CD8-positive, alpha-beta T cell (primary cell): ENCODE measurements at regions of chr16 and their contacts with region 1.

Region 1: DNA sequence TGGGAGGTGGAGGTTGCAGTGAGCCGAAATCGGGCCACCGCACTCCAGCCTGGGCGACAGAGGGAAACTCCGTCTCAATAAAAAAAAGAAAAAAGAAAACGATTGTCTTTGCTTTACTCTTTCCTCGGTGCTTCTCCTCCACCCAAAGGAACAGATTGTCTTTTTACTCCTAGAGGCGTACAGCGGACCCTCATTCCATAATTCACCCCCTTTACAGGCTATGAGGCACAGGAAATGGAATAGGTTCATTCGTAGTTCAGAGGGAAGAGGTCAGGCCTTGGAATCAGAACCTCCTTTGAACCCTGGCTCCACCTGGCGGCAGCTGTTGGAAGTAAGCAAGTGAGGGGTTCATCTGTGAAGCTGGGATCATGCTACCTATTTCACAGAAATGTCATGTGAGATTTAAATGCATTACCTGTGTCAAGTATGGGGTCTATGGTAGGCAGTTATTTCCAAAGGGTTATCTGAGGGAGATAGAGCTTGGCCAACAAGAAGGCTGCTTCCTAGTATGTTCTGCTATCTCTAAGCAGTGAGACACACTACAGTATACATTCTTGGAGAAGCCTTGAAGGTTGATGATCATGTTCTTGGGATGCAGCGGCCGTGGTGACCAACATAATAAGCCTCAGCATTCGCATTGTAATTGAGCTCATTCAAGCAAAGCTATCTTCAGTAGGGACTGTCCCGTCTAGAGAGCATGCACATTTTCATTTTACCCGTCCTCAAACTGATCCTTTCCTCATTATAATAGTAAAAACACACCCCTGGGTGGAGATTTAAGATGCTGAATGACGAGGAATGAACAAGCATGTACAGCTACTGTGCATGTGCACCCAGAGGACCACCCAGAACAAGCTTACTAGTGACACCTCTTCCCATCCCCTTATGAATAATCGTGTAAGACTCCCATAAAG is 18.7 kb upstream of the ZNF689 start:
- DNase-seq: peak; percentile 77 to 92 (median 84)
- ATAC-seq: peak; percentile 96
- H3K4me3 ChIP-seq: peak overlapping the region in 1 of 2 experiments; percentile 10
- H3K4me3 Mint-ChIP-seq: peak overlapping the region; percentile 79
- H3K27ac ChIP-seq: peak overlapping the region in 1 of 2 experiments; percentile 19
- H3K27ac Mint-ChIP-seq: no peak overlapping the region
- H3K4me1 ChIP-seq: peaks cover 9% of the 10 kb centered on the region
- H3K4me1 Mint-ChIP-seq: peaks cover 5% of the 10 kb centered on the region
- H3K27me3 ChIP-seq: no peaks in the 10 kb centered on the region
- H3K27me3 Mint-ChIP-seq: no peaks in the 10 kb centered on the region
- CTCF ChIP-seq: peak; percentile 85

Region 2: GRCh38 chr16:30557957-30558788 is 70.7 kb before region 1 on chr16 and contains the start of gene ZNF764:
- CTCF ChIA-PET with region 1: interaction called, 3 read pairs
- POLR2A ChIA-PET with region 1: interaction called, 5 read pairs
- intact Hi-C with region 1: loop called in 1 of 2 experiments (anchors 1 kb)
- DNase-seq: peak; percentile 88 to 98 (median 96)
- ATAC-seq: peak; percentile 90
- H3K4me3 ChIP-seq: peak within 1 kb of the TSS; percentile 68 to 84
- H3K4me3 Mint-ChIP-seq: peak within 1 kb of the TSS; percentile 84
- H3K27ac ChIP-seq: peak within 1 kb of the TSS; percentile 80 to 88
- H3K27ac Mint-ChIP-seq: peak within 1 kb of the TSS; percentile 93
- H3K4me1 ChIP-seq: peaks cover 28% of the 10 kb centered on the region
- H3K4me1 Mint-ChIP-seq: peaks cover 35% of the 10 kb centered on the region
- H3K27me3 ChIP-seq: no peaks in the 10 kb centered on the region
- H3K27me3 Mint-ChIP-seq: no peaks in the 10 kb centered on the region
- CTCF ChIP-seq: no peak
- total RNA-seq, gene ZNF764: 15.0 to 15.6 TPM

Region 3: DNA sequence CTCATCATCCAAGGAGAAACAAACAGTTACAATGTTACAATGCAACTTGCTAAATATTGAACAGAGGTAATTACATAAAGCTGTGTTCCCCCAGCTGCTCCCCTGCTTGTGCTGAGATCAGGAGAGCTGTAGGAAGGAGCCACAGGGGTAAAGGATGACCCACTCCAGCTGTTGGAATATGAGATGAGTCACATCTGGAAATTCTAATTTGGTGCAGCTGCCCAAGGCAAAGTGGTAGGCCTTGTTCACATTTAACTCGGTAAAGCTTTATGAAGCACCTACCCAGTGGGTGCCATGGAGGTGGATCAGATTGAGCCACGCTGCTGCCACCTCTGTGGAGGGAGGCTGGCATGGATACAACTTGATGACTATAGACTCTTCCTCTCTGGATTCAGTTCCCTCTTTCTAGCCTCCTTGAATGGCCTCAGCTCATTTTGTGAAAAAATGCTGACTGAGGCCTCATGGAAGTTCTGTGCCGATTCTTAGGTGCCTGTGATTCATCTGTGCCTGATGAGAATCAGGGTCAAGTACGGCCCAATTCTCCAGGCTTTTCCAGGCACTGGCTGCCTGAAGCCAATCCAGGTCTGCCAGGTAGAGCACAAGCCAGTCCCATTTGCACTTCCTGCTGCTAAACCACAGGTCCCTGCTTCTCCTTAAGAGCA is 26.1 kb before region 1 on chr16:
- CTCF ChIA-PET with region 1: interaction called, 13 read pairs
- POLR2A ChIA-PET with region 1: no interaction called
- intact Hi-C with region 1: no loop called
- DNase-seq: no peak
- ATAC-seq: no peak
- H3K4me3 ChIP-seq: no peak overlapping the region
- H3K4me3 Mint-ChIP-seq: no peak overlapping the region
- H3K27ac ChIP-seq: no peak overlapping the region
- H3K27ac Mint-ChIP-seq: peak overlapping the region; percentile 52
- H3K4me1 ChIP-seq: no peaks in the 10 kb centered on the region
- H3K4me1 Mint-ChIP-seq: peaks cover 4% of the 10 kb centered on the region
- H3K27me3 ChIP-seq: no peaks in the 10 kb centered on the region
- H3K27me3 Mint-ChIP-seq: no peaks in the 10 kb centered on the region
- CTCF ChIP-seq: no peak

Region 4: DNA sequence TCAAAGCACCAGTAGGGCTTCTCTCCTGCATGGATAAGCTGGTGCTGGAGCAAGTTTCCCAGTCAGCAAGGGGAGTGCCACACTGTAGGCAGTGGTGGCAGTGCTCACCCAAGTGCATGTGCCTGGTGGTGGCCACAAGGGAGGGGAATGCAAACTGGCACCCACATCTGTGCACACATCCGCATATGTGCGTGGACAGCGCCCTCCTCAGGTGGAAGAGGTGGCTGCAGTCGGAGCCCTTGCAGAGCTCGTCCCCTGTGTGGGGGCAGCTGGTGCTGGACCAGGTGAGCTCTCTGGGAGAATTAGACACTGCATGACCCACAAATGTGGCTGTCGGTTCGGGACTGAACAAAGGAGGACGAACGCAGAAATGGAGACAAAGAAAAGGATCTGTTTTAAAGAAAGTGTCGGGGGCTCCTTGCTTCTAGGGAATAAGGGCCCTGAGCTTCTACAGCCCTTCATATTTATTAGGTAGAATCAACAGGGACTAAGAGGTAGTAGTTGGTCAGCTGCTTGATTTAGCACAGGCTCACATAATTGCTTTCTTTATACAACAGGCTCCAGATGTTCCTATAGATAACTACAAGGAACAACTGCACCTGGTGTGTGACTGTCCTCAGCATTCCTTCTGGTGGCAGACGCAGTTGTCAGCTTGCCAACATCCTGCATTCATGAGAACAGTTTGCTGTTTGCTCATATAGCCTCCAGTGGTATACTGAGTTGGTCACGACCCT is 13.4 kb before region 1 on chr16:
- CTCF ChIA-PET with region 1: interaction called, 15 read pairs
- POLR2A ChIA-PET with region 1: interaction called, 6 read pairs
- intact Hi-C with region 1: loop called (anchors 1 to 2 kb)
- DNase-seq: peak; percentile 36 to 78 (median 66)
- ATAC-seq: peak; percentile 90
- H3K4me3 ChIP-seq: no peak overlapping the region
- H3K4me3 Mint-ChIP-seq: no peak overlapping the region
- H3K27ac ChIP-seq: no peak overlapping the region
- H3K27ac Mint-ChIP-seq: no peak overlapping the region
- H3K4me1 ChIP-seq: no peaks in the 10 kb centered on the region
- H3K4me1 Mint-ChIP-seq: peaks cover 1% of the 10 kb centered on the region
- H3K27me3 ChIP-seq: peaks cover 0 to 2% of the 10 kb centered on the region in 2 experiments
- H3K27me3 Mint-ChIP-seq: no peaks in the 10 kb centered on the region
- CTCF ChIP-seq: peak; percentile 50